Activated CD4-positive, alpha-beta T cell treated with anti-CD3 and anti-CD28 coated beads, Interleukin-2, amount 10 ng/mL, durations not matched to agents 24 days and 14 days (primary cell): ENCODE measurements at regions of chr19 and their contacts with region 1.

Region 1: GRCh38 chr19:58380722-58381466 is at the start of gene ZNF837:
- DNase-seq: peak; percentile 99
- H3K4me3 Mint-ChIP-seq: peak within 1 kb of the TSS; percentile 97
- H3K27ac Mint-ChIP-seq: peak within 1 kb of the TSS; percentile 94
- H3K4me1 Mint-ChIP-seq: peaks cover 21% of the 10 kb centered on the region
- H3K27me3 Mint-ChIP-seq: no peaks in the 10 kb centered on the region
- total RNA-seq, gene ZNF837: 0.89 and 1.1 TPM in 2 replicates

Region 2: GRCh38 chr19:58182989-58183816 is 197.7 kb before region 1 on chr19 and contains the start of gene ZNF274:
- intact Hi-C with region 1: loop called (anchors 2 kb)
- DNase-seq: peak; percentile 98
- H3K4me3 Mint-ChIP-seq: peak within 1 kb of the TSS; percentile 97
- H3K27ac Mint-ChIP-seq: peak within 1 kb of the TSS; percentile 96
- H3K4me1 Mint-ChIP-seq: peaks cover 13% of the 10 kb centered on the region
- H3K27me3 Mint-ChIP-seq: no peaks in the 10 kb centered on the region
- total RNA-seq, gene ZNF274: 19.4 and 19.8 TPM in 2 replicates

Region 3: GRCh38 chr19:58218899-58219298 is 162.0 kb before region 1 on chr19:
- intact Hi-C with region 1: loop called (anchors 1 kb)
- DNase-seq: peak; percentile 75
- H3K4me3 Mint-ChIP-seq: no peak overlapping the region
- H3K27ac Mint-ChIP-seq: no peak overlapping the region
- H3K4me1 Mint-ChIP-seq: peaks cover 3% of the 10 kb centered on the region
- H3K27me3 Mint-ChIP-seq: no peaks in the 10 kb centered on the region

Region 4: DNA sequence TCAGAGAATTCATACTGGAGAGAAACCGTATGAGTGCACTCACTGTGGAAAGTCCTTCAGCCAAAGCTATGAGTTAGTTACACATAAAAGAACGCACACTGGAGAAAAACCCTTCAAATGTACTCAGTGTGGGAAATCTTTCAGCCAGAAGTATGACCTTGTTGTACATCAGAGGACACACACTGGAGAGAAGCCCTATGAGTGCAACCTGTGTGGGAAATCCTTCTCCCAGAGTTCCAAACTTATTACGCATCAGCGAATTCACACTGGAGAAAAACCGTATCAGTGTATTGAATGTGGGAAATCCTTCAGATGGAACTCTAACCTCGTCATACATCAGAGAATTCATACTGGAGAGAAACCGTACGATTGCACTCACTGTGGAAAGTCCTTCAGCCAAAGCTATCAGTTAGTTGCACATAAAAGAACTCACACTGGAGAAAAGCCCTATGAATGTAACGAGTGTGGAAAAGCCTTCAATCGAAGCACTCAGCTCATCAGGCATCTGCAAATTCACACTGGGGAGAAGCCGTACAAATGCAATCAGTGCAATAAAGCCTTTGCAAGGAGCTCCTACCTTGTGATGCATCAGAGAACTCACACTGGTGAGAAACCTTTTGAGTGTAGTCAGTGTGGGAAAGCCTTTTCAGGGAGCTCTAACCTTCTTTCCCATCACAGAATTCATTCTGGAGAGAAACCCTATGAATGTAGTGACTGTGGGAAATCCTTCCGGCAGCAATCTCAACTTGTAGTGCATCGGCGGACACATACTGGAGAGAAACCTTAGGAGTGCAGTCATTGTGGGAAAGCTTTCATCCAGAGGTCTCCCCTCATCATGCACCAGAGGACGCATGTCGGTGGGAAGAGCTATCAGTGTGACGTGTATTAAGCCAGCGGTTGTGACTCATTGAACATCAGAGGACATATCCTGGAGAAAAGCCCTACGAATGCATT is 118.6 kb before region 1 on chr19:
- intact Hi-C with region 1: no loop called
- DNase-seq: no peak
- H3K4me3 Mint-ChIP-seq: no peak overlapping the region
- H3K27ac Mint-ChIP-seq: no peak overlapping the region
- H3K4me1 Mint-ChIP-seq: no peaks in the 10 kb centered on the region
- H3K27me3 Mint-ChIP-seq: no peaks in the 10 kb centered on the region

Region 5: DNA sequence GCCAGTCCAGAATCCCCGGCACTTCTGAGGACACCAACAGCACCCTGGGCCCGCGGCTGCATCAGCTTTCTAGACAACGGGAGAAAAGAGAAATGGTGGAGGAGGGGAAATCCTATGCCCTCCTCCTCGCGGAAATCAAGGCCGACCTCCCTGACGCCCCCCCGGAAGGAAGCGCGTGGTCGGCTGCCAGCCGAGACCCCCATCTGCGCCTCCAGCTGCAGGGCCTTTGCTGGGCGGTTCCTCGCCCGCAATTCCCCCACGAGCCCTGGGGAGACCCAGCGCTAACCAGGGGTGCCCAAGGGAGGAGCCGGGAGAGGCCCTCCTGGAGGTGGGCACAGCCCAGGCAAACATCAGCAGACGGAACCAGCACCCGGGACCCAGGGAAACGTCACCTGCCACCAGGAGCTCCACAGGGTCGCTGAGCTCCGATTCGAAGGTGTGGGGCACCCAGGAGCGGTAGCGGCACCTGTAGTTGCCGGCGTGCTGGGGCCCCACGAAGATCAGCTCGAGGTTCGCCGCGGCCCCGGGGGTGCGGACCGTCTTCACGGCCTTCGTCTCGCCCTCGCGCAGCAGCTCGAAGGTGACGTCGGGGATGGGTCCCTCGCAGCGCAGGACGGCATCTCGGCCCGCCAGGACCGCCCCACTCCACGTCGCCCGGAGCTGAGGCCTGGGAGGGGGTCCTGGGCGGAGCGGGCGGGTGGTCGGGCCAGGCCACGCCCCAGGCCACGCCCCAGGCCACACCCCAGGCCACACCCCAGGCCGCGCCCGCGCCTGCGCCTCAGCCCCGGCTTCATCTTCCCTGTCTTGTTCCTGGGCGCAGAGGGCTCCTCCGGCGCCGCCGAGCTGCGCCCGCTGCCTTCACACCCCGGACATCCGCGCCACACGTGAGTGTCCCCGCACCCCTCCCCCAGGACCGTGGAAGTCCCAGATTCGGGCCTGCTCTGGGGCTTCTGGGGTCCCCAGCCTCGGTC is 33.6 kb before region 1 on chr19:
- intact Hi-C with region 1: loop called (anchors 2 kb)
- DNase-seq: peak; percentile 91
- H3K4me3 Mint-ChIP-seq: peak overlapping the region; percentile 98
- H3K27ac Mint-ChIP-seq: peak overlapping the region; percentile 86
- H3K4me1 Mint-ChIP-seq: peaks cover 16% of the 10 kb centered on the region
- H3K27me3 Mint-ChIP-seq: no peaks in the 10 kb centered on the region

Region 6: GRCh38 chr19:58362272-58362994 is 18.5 kb before region 1 on chr19 and contains the start of gene ZNF497:
- intact Hi-C with region 1: loop called (anchors 1 kb)
- DNase-seq: peak; percentile 99
- H3K4me3 Mint-ChIP-seq: peak within 1 kb of the TSS; percentile 95
- H3K27ac Mint-ChIP-seq: peak within 1 kb of the TSS; percentile 97
- H3K4me1 Mint-ChIP-seq: peaks cover 9% of the 10 kb centered on the region
- H3K27me3 Mint-ChIP-seq: no peaks in the 10 kb centered on the region
- total RNA-seq, gene ZNF497: 0.79 and 1.1 TPM in 2 replicates

Region 7: DNA sequence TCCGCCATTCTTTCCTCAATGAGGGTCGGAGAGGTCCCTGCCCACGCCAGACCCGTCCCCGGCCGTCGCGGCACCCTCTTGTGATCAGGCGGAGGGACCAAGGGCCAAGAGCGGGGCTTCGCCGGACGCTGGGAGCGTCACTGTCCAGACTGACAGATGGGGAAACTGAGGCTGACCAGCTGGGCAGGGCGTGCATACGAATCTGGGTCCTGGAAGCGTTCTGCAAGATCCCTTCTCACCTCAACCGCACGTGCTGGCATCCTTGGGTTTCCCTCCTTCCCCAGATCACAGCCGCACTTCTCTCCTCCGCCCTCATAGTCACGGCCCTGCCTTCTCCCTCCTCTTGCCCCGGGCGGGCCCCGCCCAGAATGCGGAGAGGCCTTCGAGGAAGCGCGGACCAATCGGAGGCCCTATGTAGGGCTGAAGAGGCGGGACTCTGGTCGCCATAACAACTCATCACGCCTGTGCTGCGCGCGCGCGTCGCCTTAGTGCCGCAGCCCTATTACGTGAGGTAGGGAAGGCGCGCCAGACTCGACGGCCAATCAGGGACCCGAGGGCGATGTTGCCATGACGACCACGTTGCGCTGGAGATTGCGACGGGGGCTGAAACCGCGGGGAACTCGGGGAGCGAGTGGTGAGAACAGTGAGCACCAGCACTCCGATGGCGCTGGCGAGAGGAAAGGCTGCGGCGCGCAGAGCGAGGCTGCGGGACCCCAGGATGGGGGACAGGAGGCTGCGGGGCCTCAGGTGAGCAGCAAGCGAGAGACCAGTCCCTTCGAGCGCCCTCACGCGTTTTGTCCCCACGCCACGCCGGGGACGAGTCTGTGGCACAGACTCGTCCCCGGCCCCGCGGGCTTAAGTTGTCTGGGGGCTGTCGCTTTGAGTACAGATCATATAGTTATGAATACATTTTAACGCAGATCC is 20.3 kb after region 1 on chr19:
- intact Hi-C with region 1: loop called (anchors 1 kb)
- DNase-seq: peak; percentile 100
- H3K4me3 Mint-ChIP-seq: peak overlapping the region; percentile 91
- H3K27ac Mint-ChIP-seq: peak overlapping the region; percentile 90
- H3K4me1 Mint-ChIP-seq: peaks cover 10% of the 10 kb centered on the region
- H3K27me3 Mint-ChIP-seq: peaks cover 7% of the 10 kb centered on the region

Region 8: GRCh38 chr19:58428617-58429016 is 47.7 kb after region 1 on chr19:
- intact Hi-C with region 1: no loop called
- DNase-seq: no peak
- H3K4me3 Mint-ChIP-seq: no peak overlapping the region
- H3K27ac Mint-ChIP-seq: no peak overlapping the region
- H3K4me1 Mint-ChIP-seq: no peaks in the 10 kb centered on the region
- H3K27me3 Mint-ChIP-seq: no peaks in the 10 kb centered on the region

Region 9: DNA sequence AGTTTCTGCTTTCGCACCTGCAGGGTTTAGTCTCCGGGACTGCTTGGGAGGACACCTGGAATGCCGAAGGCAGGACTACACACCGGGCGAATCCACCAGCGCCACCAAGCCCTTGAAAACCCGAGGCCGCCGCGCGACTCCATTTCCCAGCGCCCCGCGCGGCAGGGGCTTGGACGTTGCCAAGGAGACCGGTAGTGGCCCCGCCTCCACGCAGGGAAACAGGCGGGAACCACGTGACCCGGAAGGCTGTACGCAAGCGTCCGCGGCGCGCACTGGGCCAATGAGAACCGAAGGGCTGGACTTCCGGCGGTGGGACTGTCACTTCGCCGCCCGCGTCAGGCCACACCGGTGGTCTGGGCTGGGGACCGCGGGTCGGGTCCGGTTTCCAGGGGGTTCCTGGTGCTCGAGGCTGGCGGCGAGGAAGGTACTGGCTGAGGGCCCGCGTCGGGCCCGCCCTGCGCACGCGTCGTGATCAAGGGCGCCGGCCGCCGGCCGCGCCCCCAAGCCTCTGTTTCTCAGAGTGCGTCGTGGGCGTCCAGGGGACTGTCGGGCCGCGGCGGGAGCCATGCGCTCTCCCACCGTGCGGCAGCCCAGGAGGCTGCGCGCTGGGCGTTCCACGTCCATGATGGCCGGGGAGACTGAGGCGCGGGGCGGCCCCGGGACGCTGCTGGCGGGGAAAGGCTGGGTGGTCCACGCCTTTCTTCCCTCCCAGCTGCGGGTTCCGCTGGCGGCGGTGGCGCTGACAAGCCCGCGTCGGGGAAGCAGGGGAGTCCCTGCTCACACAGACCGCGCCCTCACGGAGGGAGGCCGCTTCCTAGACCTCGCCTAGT is 86.1 kb after region 1 on chr19 and contains the start of gene ZNF324:
- intact Hi-C with region 1: loop called (anchors 2 kb)
- DNase-seq: peak; percentile 100
- H3K4me3 Mint-ChIP-seq: peak within 1 kb of the TSS; percentile 89
- H3K27ac Mint-ChIP-seq: peak within 1 kb of the TSS; percentile 84
- H3K4me1 Mint-ChIP-seq: peaks cover 15% of the 10 kb centered on the region
- H3K27me3 Mint-ChIP-seq: peaks cover 2% of the 10 kb centered on the region
- total RNA-seq, gene ZNF324: 13.6 and 14.7 TPM in 2 replicates